ENCODE measurements at regions of chr10 and their contacts with region 1.

Region 1: DNA sequence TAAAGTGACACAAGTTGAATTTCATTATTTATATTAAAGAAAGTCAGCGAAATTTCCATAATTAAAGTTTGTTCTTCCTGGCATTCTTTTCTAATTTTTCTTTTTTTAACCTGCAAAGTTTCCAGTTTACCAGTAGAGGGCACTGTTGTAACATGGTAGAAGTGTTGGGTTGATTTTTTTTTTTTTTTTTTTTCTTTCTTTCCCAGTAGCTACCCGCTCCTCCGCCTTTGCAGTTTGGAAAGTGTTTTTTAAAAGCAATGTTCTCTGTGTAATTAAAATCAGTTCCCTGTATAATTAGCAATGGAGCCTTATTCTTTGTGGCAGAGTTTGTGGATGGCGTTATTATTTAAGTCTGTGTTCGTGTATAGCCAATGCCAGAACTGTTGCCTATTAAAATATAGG is 53.7 kb downstream of the TAF3 start:
- DNase-seq: no peak
- H3K4me3 ChIP-seq: peak overlapping the region in 1 of 2 donors; percentile 3
- H3K27ac ChIP-seq: no peak overlapping the region
- H3K4me1 ChIP-seq: no peaks in the 10 kb centered on the region
- H3K27me3 ChIP-seq: no peaks in the 10 kb centered on the region
- CTCF ChIP-seq: peak; percentile 36 to 73 (median 70)
- POLR2A ChIP-seq: no peak

Region 2: DNA sequence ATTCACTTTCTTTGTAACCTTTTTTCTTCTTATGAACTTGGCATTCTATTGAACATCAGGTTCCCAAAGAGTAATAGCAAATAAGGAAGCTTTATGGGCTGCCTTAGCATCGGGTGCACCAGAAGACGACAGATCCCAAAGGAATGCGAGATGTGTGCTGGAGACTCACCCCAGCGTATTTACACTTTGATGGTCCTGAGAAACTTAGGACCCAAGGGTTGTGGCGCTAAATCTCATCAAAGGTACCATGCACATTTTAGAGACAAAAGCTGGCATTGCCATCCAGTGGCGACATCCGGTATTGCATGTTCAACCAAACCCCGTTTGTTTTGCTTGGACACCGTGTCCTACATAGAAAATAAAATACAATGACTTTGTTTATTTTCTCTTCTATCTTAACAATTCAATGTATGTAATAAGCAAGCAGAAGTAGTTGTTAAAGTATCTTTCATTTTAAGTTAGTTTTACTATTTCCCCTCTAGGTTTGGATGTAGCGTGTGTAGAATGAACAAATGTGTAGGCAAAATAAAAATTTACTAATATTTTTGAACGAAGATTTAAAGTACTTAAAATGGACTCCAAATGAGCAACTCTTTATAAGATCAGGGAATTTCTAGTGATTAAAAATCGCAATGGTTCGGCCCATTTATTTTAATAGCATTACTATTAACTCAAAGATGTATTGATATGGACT is 1337.2 kb after region 1 on chr10:
- intact Hi-C with region 1: loop called (anchors 2 kb)
- DNase-seq: peak; percentile 53
- H3K4me3 ChIP-seq: no peak overlapping the region
- H3K27ac ChIP-seq: no peak overlapping the region
- H3K4me1 ChIP-seq: no peaks in the 10 kb centered on the region
- H3K27me3 ChIP-seq: no peaks in the 10 kb centered on the region
- CTCF ChIP-seq: peak; percentile 78 to 97 (median 88)
- POLR2A ChIP-seq: no peak

Region 3: GRCh38 chr10:9302120-9302746 is 1430.2 kb after region 1 on chr10:
- intact Hi-C with region 1: loop called (anchors 10 kb)
- DNase-seq: peak; percentile 22
- H3K4me3 ChIP-seq: no peak overlapping the region
- H3K27ac ChIP-seq: no peak overlapping the region
- H3K4me1 ChIP-seq: no peaks in the 10 kb centered on the region
- H3K27me3 ChIP-seq: no peaks in the 10 kb centered on the region
- CTCF ChIP-seq: peak in 3 of 4 experiments; percentile 53 to 68 (median 57)
- POLR2A ChIP-seq: no peak